Psoas muscle (tissue), 8 donors: ENCODE measurements at regions of chr9 and their contacts with region 1.

Region 1: GRCh38 chr9:73081979-73082657 is 69.5 kb upstream of the ANXA1 start:
- DNase-seq: no peak
- ATAC-seq: peak in 3 of 4 donors; percentile 56 to 77 (median 69)
- H3K4me3 ChIP-seq: no peak overlapping the region
- H3K27ac ChIP-seq: no peak overlapping the region
- H3K4me1 ChIP-seq: no peaks in the 10 kb centered on the region
- H3K27me3 ChIP-seq: no peaks in the 10 kb centered on the region
- CTCF ChIP-seq: peak; percentile 81

Region 2: DNA sequence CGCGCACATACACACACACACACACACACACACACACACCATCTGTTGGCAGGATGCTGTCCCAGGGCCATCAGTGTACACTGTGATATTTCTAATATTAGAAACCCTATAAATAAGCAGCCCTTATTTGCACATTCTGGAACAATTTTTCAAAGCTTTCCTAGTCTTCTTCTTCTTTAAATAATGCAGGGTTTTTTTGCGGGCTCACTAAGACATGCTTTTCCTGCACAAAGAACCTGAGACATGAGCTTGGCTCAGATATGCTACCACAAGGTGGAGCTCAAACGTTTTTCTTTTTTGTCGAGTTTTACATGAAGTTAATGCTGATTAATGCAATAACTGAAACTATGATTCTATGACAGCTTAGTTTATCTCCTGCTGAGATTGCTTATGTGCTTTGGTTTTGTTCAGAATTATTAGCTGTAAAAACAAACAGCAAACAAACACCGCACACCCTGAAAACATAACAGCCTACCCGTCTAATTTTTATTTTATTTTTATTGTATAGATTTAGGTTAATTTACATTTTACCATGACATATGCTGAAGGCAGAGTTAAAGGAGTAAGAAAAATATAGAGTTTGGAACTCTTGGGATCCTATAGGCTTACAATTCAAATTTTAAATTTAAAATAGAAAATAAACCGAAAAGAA is 225.0 kb before region 1 on chr9:
- intact Hi-C with region 1: loop called in 1 of 2 experiments (anchors 2 kb)
- DNase-seq: no peak
- ATAC-seq: peak in 3 of 4 donors; percentile 53 to 83 (median 67)
- H3K4me3 ChIP-seq: no peak overlapping the region
- H3K27ac ChIP-seq: no peak overlapping the region
- H3K4me1 ChIP-seq: peaks cover 21% of the 10 kb centered on the region
- H3K27me3 ChIP-seq: no peaks in the 10 kb centered on the region
- CTCF ChIP-seq: peak; percentile 64

Region 3: DNA sequence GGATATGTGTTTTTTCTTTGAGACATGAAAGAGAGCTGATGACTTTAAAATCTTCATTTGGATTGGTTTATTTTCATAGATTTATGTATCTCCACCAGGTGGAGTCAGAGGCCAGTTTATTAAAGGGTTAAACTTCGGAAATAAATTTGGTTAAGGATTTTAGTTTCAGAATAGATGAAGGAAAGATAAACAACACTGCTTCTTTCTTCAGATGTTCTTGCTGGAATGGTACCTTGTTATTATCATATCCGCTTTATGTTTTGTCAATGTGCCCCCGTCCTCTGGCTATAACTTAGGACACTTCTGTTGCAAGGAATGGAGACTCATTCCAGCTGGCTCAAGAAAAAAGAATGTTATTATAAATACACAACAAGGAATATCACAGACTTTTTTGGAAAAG is 210.4 kb before region 1 on chr9:
- intact Hi-C with region 1: loop called in 1 of 2 experiments (anchors 5 kb)
- DNase-seq: no peak
- ATAC-seq: peak in 2 of 4 donors; percentile 51 to 76
- H3K4me3 ChIP-seq: peak overlapping the region; percentile 40
- H3K27ac ChIP-seq: no peak overlapping the region
- H3K4me1 ChIP-seq: peaks cover 8% of the 10 kb centered on the region
- H3K27me3 ChIP-seq: no peaks in the 10 kb centered on the region
- CTCF ChIP-seq: peak; percentile 60

Region 4: DNA sequence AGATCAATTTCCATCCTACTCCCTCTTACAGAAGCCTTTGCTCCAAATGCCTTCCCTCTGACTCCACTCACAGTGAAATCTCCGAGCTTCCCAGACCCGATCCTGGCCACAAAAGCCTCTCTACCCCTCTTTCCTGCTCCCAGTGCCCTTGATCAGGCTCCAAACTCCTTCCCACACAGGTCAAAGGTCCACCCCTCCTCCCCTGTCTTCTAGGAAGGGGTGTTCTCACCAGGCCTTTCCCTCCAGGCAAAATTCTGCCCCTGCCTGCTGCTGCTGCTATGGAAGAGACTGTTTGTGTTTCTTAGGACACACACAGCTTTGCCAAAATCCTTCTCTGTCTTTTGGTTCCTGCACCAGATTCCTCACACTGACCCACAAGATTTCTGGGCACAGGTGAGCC is 43.5 kb before region 1 on chr9:
- intact Hi-C with region 1: no loop called
- DNase-seq: peak; percentile 51 to 56
- ATAC-seq: peak in 3 of 4 donors; percentile 45 to 66 (median 46)
- H3K4me3 ChIP-seq: no peak overlapping the region
- H3K27ac ChIP-seq: no peak overlapping the region
- H3K4me1 ChIP-seq: peaks cover 13% of the 10 kb centered on the region
- H3K27me3 ChIP-seq: no peaks in the 10 kb centered on the region
- CTCF ChIP-seq: no peak

Region 5: DNA sequence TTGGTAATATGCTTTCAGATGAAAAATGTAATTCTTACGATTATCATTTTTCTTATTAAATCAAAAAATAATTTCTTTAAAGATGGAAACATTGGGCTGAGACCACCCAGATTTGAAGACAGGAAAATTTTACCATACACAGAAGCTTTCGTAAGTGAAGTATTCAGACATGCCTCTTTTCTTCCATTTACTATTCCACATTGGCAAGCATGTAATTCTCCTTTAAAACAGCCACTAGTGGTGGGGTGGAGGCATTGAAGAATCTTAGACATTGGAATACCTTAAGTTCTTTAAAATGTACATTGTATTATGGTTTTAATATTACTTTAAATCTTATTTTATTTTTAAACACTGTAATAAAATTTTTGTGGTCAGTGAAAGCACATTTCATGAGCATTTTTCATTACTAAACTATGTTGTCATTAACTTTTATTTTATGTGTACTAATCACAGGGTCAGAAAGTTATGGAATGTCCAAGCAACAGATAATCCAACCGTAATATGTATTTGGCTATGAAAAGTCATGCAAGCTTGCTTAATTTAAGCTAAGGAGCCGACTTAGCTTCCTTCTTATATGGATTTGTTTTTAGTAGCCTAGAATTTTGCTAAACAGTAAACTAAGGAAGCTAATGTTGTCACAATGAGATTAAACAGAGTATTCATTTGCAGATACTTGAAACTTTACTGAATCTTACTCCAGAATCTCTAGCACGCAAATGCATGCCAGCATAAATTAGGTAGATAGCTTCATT is 31.9 kb before region 1 on chr9:
- intact Hi-C with region 1: no loop called
- DNase-seq: no peak
- ATAC-seq: no peak
- H3K4me3 ChIP-seq: no peak overlapping the region
- H3K27ac ChIP-seq: no peak overlapping the region
- H3K4me1 ChIP-seq: peaks cover 12% of the 10 kb centered on the region
- H3K27me3 ChIP-seq: no peaks in the 10 kb centered on the region
- CTCF ChIP-seq: no peak

Region 6: GRCh38 chr9:73219985-73220626 is 138.0 kb after region 1 on chr9:
- intact Hi-C with region 1: no loop called
- DNase-seq: no peak
- ATAC-seq: no peak
- H3K4me3 ChIP-seq: no peak overlapping the region
- H3K27ac ChIP-seq: no peak overlapping the region
- H3K4me1 ChIP-seq: no peaks in the 10 kb centered on the region
- H3K27me3 ChIP-seq: peaks cover 2 to 4% (median 3%) of the 10 kb centered on the region in 3 donors
- CTCF ChIP-seq: no peak

Region 7: GRCh38 chr9:73239570-73240267 is 157.6 kb after region 1 on chr9:
- intact Hi-C with region 1: no loop called
- DNase-seq: no peak
- ATAC-seq: no peak
- H3K4me3 ChIP-seq: no peak overlapping the region
- H3K27ac ChIP-seq: no peak overlapping the region
- H3K4me1 ChIP-seq: no peaks in the 10 kb centered on the region
- H3K27me3 ChIP-seq: no peaks in the 10 kb centered on the region
- CTCF ChIP-seq: no peak